BJ (cell line): ENCODE measurements at regions of chr12 and their contacts with region 1.

Region 1: DNA sequence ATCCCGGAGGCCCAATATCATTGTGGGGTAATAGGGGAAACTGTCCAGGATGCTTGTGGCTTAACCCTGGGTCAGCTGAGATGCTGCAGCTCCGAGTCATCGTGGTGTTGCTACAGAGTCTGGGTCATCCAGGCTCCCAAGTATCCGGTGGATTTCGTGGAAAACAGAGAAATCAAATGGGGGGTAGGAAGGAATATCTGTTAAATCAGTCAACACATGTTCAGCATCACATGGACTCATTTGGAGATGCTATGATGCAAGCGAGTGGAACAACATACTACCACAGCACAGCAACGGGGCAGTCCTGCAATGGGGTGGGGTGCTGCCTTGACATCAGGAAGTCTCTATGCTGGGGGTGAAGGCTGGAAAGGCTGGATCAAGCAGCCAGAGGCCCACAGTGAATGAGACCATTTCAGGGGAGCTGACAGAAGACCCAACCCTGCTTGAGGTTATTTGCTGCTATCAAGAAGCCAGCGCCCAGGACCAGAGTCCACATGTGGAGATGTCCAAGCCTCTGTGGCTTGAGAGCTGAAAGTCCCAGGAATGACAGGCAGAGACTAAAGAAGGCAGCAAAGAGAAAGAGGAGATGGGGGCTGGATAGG is 22.9 kb downstream of the VDR start:
- DNase-seq: peak; percentile 99
- H3K4me3 ChIP-seq: no peak overlapping the region
- H3K27me3 ChIP-seq: no peaks in the 10 kb centered on the region
- CTCF ChIP-seq: no peak

Region 2: DNA sequence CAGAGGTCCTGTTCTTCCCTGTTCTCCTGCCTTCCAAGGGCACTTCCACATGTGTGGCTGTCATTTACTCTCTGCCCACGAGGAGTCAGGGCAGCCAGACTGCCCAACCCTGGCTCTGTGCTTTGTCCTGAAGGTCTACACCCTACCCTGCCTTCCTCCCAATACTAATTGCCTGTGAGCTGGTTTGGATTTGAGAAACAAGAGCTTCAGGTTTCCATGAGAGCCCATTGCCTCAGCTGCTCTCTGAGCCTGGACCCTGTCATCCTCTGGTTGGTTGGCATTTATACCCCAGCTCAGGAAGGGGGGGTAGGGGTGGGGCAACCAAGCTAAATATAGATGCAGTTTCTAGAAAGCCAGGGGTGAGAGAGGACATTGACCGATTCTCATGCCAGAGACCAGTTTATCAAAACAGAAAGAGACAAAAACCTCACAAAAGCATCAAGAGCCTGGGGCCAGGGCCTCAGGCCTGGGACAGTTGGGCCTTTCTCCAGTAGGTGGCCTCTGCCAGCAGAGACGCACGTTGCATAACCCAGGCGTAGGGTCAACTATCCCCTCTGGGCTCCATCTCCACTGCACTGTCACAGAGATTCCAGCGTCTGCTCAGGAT is 11.6 kb before region 1 on chr12:
- CTCF ChIA-PET with region 1: interaction called, 22 read pairs
- POLR2A ChIA-PET with region 1: no interaction called
- DNase-seq: peak; percentile 26
- H3K4me3 ChIP-seq: no peak overlapping the region
- H3K27me3 ChIP-seq: no peaks in the 10 kb centered on the region
- CTCF ChIP-seq: peak; percentile 71

Region 3: DNA sequence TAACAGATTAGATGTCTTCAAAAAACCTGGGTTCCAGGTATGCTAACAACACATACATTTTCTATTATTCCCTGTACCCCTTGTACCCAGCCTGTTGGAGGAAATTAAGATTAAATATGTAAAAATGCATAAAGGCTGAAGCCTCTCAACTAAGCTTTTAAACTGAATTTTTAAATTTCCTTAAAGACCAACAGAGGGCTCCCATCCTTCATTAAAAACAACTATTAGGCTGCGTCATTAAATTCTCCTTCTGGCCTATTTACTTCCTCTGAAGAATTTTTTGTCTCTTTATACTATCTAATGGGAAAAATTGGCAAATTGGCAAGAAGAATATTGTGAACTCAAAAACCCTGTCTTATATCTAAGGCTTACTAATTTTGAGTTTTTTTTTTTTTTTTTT is 202.1 kb after region 1 on chr12:
- CTCF ChIA-PET with region 1: no interaction called
- POLR2A ChIA-PET with region 1: no interaction called
- DNase-seq: no peak
- H3K4me3 ChIP-seq: no peak overlapping the region
- H3K27me3 ChIP-seq: no peaks in the 10 kb centered on the region
- CTCF ChIP-seq: peak; percentile 37